Lower leg skin (tissue), 4 donors: ENCODE measurements at regions of chrX and their contacts with region 1.

Region 1: DNA sequence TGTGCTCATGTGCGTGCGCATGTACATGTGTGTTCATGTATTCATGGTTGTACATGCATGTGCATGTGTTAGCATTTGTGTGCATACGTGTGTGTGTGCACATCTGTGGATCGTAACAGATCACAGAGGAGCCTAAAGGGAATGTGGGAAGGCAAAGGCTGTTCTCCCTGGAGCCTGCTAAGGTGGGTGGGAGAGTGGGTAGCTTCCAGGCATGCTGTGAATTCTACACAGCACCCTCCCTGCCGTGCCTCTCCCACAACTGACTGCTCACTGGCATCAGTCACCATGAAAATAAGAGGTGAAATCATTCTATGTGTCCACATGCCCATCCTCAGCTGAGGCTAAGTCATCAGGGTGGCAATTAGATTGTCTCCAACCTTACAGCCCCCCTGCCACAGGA is 600.9 kb downstream of the MID1IP1 start:
- DNase-seq: no peak
- H3K4me3 ChIP-seq: no peak overlapping the region
- CTCF ChIP-seq: no peak
- POLR2A ChIP-seq: no peak

Region 2: DNA sequence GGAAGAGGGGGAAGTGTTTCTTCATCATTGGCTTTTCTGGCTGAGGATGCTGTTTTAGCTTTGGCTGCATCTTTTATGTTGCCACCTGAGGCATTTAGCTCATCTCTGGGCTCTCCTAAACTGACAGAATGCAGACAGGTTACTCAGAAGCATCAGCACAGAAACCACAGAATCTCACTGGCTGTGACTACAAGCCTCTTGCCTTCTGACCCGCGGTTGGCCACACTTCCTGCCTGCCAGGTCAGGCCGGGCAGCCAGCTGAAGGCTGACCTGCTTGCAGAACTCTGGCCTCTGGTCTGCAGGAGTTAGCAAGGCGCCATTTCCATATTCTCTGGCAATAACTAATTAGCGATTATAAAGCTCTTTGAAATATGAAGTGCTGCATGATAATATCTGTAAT is 234.4 kb before region 1 on chrX:
- intact Hi-C with region 1: loop called (anchors 5 kb)
- DNase-seq: peak in 1 of 2 donors; percentile 70
- H3K4me3 ChIP-seq: no peak overlapping the region
- CTCF ChIP-seq: no peak
- POLR2A ChIP-seq: no peak

Region 3: GRCh38 chrX:39633293-39633692 is 231.1 kb after region 1 on chrX:
- intact Hi-C with region 1: no loop called
- DNase-seq: no peak
- H3K4me3 ChIP-seq: no peak overlapping the region
- CTCF ChIP-seq: no peak
- POLR2A ChIP-seq: no peak

Region 4: GRCh38 chrX:40552768-40553167 is 1150.6 kb after region 1 on chrX:
- intact Hi-C with region 1: no loop called
- DNase-seq: no peak
- H3K4me3 ChIP-seq: no peak overlapping the region
- CTCF ChIP-seq: no peak
- POLR2A ChIP-seq: no peak